Lower leg skin (tissue), 4 donors: ENCODE measurements at regions of chr1 and their contacts with region 1.

Region 1: GRCh38 chr1:147622731-147623130 is 47.6 kb downstream of the ACP6 start:
- DNase-seq: no peak
- H3K4me3 ChIP-seq: no peak overlapping the region
- CTCF ChIP-seq: no peak
- POLR2A ChIP-seq: no peak

Region 2: DNA sequence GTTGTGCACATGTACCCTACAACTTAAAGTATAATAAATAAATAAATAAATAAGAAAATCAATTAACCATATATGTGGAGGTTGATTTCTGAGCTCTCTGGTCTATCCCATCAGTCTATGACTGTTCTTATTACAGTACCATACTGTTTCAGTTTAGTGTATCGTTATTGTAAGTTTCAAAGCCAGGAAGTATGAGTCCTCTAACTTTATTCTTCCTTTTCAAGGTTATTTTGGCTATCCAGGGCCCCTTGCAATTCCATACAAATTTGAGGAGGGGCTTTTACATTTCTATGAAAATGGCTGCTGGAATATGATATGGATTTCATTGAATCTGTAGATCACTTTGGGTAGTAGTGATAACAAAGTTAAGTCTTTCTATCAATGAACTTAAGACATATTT is 178.3 kb before region 1 on chr1:
- intact Hi-C with region 1: no loop called
- DNase-seq: no peak
- H3K4me3 ChIP-seq: no peak overlapping the region
- CTCF ChIP-seq: no peak
- POLR2A ChIP-seq: no peak

Region 3: GRCh38 chr1:147494998-147495580 is 127.6 kb before region 1 on chr1:
- intact Hi-C with region 1: loop called (anchors 5 kb)
- DNase-seq: peak; percentile 53 to 91
- H3K4me3 ChIP-seq: no peak overlapping the region
- CTCF ChIP-seq: peak in 1 of 3 donors; percentile 32
- POLR2A ChIP-seq: no peak

Region 4: DNA sequence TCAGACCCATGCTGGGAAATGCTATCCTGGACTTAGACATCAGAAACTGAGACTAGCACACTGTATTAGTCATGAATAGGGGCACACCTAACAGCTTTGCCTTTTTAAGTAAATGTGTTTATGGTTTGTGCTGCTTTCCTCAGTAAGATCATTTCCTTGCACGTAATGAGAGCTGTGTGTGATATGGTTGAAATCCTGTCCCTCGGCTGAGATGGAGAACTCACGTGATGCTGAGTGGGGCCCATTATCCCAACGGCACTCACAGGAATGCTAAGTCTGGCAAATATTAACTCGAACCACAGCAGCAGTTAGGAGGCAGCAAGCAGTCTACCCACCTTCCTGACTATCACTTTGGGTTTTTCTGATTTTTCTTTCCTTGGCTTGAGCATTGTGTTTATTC is 43.2 kb before region 1 on chr1:
- intact Hi-C with region 1: no loop called
- DNase-seq: no peak
- H3K4me3 ChIP-seq: no peak overlapping the region
- CTCF ChIP-seq: no peak
- POLR2A ChIP-seq: no peak